SK-N-SH (cell line): ENCODE measurements at regions of chr9 and their contacts with region 1.

Region 1: GRCh38 chr9:16247188-16247875 is 623.1 kb downstream of the BNC2 start:
- DNase-seq: no peak
- H3K4me3 ChIP-seq: no peak overlapping the region
- H3K27ac ChIP-seq: peak overlapping the region in 1 of 2 experiments; percentile 40; a peak in 2 of 4 replicates
- H3K4me1 ChIP-seq: peaks cover 0 to 13% of the 10 kb centered on the region in 2 experiments; a peak in 2 of 4 replicates
- H3K27me3 ChIP-seq: no peaks in the 10 kb centered on the region
- CTCF ChIP-seq: no peak
- EP300 ChIP-seq: no peak; a peak in 1 of 4 replicates
- RAD21 ChIP-seq: no peak

Region 2: GRCh38 chr9:16257604-16258003 is 10.3 kb after region 1 on chr9:
- CTCF ChIA-PET with region 1: interaction called, 20 read pairs
- POLR2A ChIA-PET with region 1: no interaction called
- DNase-seq: no peak
- H3K4me3 ChIP-seq: no peak overlapping the region
- H3K27ac ChIP-seq: no peak overlapping the region
- H3K4me1 ChIP-seq: peaks cover 0 to 5% of the 10 kb centered on the region in 2 experiments; a peak in 1 of 4 replicates
- H3K27me3 ChIP-seq: no peaks in the 10 kb centered on the region
- CTCF ChIP-seq: peak; percentile 56
- EP300 ChIP-seq: no peak
- RAD21 ChIP-seq: peak; percentile 40